CD8-positive, alpha-beta T cell (primary cell): ENCODE measurements at regions of chr14 and their contacts with region 1.

Region 1: GRCh38 chr14:103346286-103346685 is 12.2 kb downstream of the EIF5 start:
- DNase-seq: no peak
- ATAC-seq: no peak
- H3K4me3 ChIP-seq: no peak overlapping the region
- H3K4me3 Mint-ChIP-seq: no peak overlapping the region
- H3K27ac ChIP-seq: no peak overlapping the region
- H3K27ac Mint-ChIP-seq: no peak overlapping the region
- H3K4me1 ChIP-seq: no peaks in the 10 kb centered on the region
- H3K4me1 Mint-ChIP-seq: peaks cover 12% of the 10 kb centered on the region
- H3K27me3 ChIP-seq: no peaks in the 10 kb centered on the region
- H3K27me3 Mint-ChIP-seq: no peaks in the 10 kb centered on the region
- CTCF ChIP-seq: no peak

Region 2: DNA sequence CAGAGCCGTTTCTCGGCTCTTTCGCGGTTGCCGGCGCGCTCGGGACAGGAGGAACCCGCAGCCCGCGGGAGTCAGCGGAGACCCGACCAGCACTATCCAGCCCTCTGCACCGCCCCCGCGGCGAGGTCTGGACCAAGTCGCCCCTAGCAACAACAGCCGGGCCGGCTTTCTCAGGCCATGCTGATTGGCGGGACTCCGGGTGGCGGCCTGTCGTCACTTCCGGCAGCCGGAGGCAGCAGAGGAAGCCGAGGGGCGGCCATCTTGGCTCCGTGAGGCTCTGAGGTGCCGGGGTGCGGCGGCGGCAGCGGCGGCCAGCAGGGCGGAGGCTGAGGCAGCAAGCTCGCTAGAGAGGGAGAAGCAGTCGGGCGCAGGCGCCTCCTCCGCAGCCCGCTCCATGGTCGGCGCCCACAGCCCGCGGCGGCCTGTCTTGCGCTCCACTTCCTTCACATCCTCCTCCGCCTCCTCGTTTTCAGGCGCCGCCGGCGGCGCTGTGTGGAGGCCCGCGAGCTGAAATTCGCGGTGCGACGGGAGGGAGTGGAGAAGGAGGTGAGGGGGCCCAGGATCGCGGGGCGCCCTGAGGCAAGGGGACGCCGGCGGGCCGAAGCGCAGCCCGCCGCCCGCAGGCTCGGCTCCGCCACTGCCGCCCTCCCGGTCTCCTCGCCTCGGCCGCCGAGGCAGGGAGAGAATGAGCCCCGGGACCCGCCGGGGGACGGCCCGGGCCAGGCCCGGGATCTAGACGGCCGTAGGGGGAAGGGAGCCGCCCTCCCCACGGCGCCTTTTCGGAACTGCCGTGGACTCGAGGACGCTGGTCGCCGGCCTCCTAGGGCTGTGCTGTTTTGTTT is 39.1 kb after region 1 on chr14 and contains the start of gene MARK3:
- CTCF ChIA-PET with region 1: no interaction called
- POLR2A ChIA-PET with region 1: interaction called, 4 read pairs
- intact Hi-C with region 1: loop called in 1 of 2 experiments (anchors 2 kb)
- DNase-seq: peak; percentile 91 to 98 (median 96)
- ATAC-seq: peak; percentile 88
- H3K4me3 ChIP-seq: peak within 1 kb of the TSS; percentile 72 to 73
- H3K4me3 Mint-ChIP-seq: peak within 1 kb of the TSS; percentile 97
- H3K27ac ChIP-seq: peak within 1 kb of the TSS; percentile 76 to 92
- H3K27ac Mint-ChIP-seq: peak within 1 kb of the TSS; percentile 96
- H3K4me1 ChIP-seq: peaks cover 26% of the 10 kb centered on the region
- H3K4me1 Mint-ChIP-seq: peaks cover 33% of the 10 kb centered on the region
- H3K27me3 ChIP-seq: no peaks in the 10 kb centered on the region
- H3K27me3 Mint-ChIP-seq: no peaks in the 10 kb centered on the region
- CTCF ChIP-seq: peak; percentile 16
- total RNA-seq, gene MARK3: 123 to 124 TPM

Region 3: DNA sequence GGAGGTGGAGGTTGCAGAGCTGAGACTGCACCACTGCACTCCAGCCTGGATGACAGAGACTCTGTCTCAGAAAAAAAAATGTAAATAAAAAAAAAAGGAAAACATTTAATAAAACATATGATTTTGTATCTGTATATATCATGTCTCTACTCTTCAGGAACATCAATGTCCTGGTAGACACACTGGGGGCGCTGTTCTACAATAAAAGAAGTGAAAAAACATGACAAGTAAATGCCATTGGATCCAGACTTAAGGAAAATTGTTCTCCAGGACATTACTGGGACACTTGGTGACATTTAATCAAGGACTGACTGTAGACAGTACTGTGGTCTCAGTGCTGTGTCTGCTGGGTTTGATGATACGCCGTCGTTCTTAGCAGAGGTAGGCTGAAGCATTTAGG is 267.2 kb after region 1 on chr14:
- CTCF ChIA-PET with region 1: no interaction called
- POLR2A ChIA-PET with region 1: no interaction called
- intact Hi-C with region 1: no loop called
- DNase-seq: peak in 1 of 9 experiments; percentile 13
- ATAC-seq: no peak
- H3K4me3 ChIP-seq: no peak overlapping the region
- H3K4me3 Mint-ChIP-seq: no peak overlapping the region
- H3K27ac ChIP-seq: no peak overlapping the region
- H3K27ac Mint-ChIP-seq: no peak overlapping the region
- H3K4me1 ChIP-seq: no peaks in the 10 kb centered on the region
- H3K4me1 Mint-ChIP-seq: no peaks in the 10 kb centered on the region
- H3K27me3 ChIP-seq: no peaks in the 10 kb centered on the region
- H3K27me3 Mint-ChIP-seq: peaks cover 16% of the 10 kb centered on the region
- CTCF ChIP-seq: no peak